Lower leg skin (tissue), 4 donors: ENCODE measurements at regions of chr15 and their contacts with region 1.

Region 1: DNA sequence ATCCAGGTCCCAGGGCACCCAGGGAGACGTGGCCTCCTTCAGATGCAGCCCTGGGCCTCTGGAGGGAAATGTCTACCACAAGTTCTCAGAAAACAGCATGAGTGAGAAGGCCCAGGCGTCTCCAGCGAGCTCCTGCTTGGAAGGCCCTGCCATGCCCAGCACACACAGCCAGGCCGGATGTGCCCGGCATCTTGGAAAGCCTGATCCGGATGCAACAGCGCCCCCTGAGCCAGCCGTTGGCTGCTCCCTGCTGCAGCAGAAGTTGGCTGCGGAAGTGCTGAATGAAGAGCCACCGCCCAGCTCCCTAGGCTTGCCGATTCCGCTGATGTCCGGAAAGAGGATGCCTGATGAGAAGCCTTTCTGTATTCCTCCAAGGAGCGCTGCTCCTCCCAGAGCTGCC is 856 bp downstream of the NPAP1 start:
- DNase-seq: peak in 1 of 2 donors; percentile 80
- H3K4me3 ChIP-seq: no peak overlapping the region
- CTCF ChIP-seq: no peak
- POLR2A ChIP-seq: no peak

Region 2: GRCh38 chr15:24966364-24967103 is 290.1 kb after region 1 on chr15:
- intact Hi-C with region 1: no loop called
- DNase-seq: no peak
- H3K4me3 ChIP-seq: no peak overlapping the region
- CTCF ChIP-seq: no peak
- POLR2A ChIP-seq: no peak

Region 3: DNA sequence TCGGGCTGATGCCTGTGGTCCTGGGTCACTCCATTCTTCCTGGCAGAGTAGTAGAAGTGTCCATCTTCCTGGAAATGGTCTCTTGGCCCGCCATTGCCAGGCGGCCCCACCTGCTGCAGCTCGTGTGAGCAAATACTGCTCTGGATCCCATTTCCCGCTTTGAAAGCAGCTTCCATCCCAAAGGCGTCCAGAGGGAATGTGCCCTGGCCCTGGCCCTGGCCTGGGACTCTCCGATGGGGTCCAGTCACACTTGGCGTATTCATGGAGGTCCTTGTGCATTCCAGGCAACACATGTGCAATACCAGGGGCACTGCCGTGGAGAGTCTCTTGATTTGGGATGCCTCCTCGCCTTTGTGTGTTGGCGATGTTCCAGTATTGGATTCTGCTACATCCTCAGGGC is 389.4 kb after region 1 on chr15:
- intact Hi-C with region 1: loop called (anchors 5 kb)
- DNase-seq: no peak
- H3K4me3 ChIP-seq: no peak overlapping the region
- CTCF ChIP-seq: no peak
- POLR2A ChIP-seq: no peak